Activated CD4-positive, alpha-beta memory T cell treated with anti-CD3 and anti-CD28 coated beads, Interleukin-2, amount 10 ng/mL, durations not matched to agents 7 days and 5 days (primary cell): ENCODE measurements at regions of chr19 and their contacts with region 1.

Region 1: GRCh38 chr19:39970675-39971379 is at the start of gene PSMC4:
- DNase-seq: peak; percentile 99
- H3K4me3 Mint-ChIP-seq: peak within 1 kb of the TSS; percentile 89
- H3K27ac Mint-ChIP-seq: peak within 1 kb of the TSS; percentile 88
- H3K4me1 Mint-ChIP-seq: peaks cover 48% of the 10 kb centered on the region
- H3K27me3 Mint-ChIP-seq: no peaks in the 10 kb centered on the region
- total RNA-seq, gene PSMC4: 96.4 to 97.6 TPM

Region 2: GRCh38 chr19:39792999-39793546 is 177.8 kb before region 1 on chr19:
- CTCF ChIA-PET with region 1: interaction called, 22 read pairs
- POLR2A ChIA-PET with region 1: no interaction called
- DNase-seq: peak; percentile 78
- H3K4me3 Mint-ChIP-seq: peak overlapping the region; percentile 73
- H3K27ac Mint-ChIP-seq: no peak overlapping the region
- H3K4me1 Mint-ChIP-seq: peaks cover 14% of the 10 kb centered on the region
- H3K27me3 Mint-ChIP-seq: peaks cover 24% of the 10 kb centered on the region

Region 3: DNA sequence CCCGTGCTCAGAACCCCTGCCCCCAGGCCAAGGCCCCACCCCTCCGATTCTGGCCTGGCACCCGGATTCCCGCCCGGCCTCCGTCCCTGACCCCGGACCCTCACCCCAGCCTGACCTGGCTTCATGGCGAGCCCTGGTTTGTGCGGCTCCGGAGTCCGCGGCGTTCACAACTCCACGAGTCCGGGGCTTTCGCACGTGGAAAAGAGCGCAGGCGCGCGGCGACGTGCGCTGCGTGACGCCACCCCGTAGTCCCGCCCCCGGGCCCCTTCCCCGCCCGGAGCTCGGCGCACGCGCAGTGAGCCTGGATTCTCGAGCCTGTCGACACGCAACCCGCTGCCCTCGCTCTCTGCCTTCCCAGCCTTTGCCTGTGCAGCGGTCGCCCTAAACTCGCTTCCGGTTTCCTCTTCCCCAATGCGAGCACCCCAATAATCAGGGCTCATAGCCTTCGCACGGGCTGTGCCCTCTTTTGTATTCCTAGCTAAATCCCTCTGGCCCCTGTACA is 124.6 kb before region 1 on chr19 and contains the start of gene FBL:
- CTCF ChIA-PET with region 1: interaction called, 25 read pairs
- POLR2A ChIA-PET with region 1: interaction called, 26 read pairs
- DNase-seq: peak; percentile 98
- H3K4me3 Mint-ChIP-seq: peak within 1 kb of the TSS; percentile 88
- H3K27ac Mint-ChIP-seq: peak within 1 kb of the TSS; percentile 87
- H3K4me1 Mint-ChIP-seq: peaks cover 48% of the 10 kb centered on the region
- H3K27me3 Mint-ChIP-seq: no peaks in the 10 kb centered on the region
- total RNA-seq, gene FBL: 294 to 302 TPM

Region 4: DNA sequence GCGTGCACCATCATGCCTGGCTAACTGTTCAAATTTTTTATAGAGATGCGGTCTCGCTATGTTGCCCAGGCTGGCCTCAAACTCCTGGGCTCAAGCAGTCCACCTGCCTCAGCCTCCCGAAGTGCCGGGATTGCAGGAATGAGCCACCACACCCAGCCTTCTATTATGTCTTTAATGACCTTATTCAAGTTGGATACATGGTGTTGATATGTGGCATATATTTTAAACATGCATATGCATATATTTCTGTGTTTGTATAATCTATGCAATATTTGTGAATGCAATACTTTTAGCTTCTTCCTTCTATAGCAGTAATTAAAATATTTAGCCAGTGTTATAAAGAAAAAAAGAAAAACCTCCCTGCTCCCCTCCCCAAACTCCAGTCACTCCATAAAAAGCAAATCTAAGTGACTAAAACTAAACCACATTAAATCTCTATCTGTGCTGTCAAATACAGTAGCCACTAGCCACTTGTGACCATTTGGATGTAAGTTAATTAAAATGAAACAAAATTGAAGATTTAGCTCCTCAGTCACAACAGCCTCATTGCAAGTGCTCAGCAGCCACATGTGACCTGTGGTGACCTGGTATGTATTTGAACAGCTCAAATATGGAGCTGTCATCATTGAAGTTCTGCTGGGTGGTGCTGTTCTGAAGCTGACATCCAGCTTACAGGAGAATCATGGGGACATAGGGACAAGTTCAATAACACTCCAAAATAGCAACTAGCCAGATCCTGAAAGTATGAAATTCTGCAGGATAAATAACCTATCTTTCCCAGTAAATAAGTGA is 63.8 kb before region 1 on chr19:
- CTCF ChIA-PET with region 1: interaction called, 18 read pairs
- POLR2A ChIA-PET with region 1: interaction called, 3 read pairs
- DNase-seq: no peak
- H3K4me3 Mint-ChIP-seq: no peak overlapping the region
- H3K27ac Mint-ChIP-seq: no peak overlapping the region
- H3K4me1 Mint-ChIP-seq: no peaks in the 10 kb centered on the region
- H3K27me3 Mint-ChIP-seq: no peaks in the 10 kb centered on the region

Region 5: GRCh38 chr19:39953915-39954314 is 16.9 kb before region 1 on chr19:
- CTCF ChIA-PET with region 1: interaction called, 19 read pairs
- POLR2A ChIA-PET with region 1: interaction called, 23 read pairs
- DNase-seq: no peak
- H3K4me3 Mint-ChIP-seq: no peak overlapping the region
- H3K27ac Mint-ChIP-seq: peak overlapping the region; percentile 52
- H3K4me1 Mint-ChIP-seq: peaks cover 39% of the 10 kb centered on the region
- H3K27me3 Mint-ChIP-seq: no peaks in the 10 kb centered on the region

Region 6: DNA sequence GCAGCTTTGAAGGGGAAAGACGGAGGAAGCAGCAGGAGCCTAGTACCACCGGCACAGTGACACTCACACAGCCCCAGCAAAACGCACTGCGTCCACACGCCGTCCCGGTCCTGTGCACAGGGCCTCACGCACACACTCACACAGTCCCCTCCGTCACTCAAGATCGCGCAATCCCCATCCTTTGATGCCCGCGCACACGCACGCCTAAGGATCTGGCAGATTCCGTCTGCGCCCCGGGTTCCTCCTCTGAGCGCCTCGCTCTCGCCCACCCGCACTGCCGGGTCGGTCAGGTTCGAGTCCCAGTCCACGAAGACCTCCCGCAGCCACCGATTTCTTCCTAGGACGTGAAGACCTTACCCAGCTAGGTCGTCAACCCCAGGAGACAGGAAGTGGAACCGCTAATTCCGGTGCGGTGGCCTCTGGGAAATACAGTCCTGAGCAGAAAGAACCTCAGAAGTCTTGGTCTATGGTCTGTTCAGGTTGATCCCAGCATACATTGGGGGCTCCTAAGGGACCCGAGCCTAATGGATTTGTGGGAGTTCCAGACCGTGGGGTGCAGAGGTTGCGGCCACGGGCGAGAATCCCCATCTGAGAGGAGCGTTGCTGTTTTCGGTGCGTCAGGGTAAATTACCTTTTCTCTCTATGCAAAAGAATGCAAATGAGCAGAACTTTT is 85.1 kb after region 1 on chr19 and contains the start of gene ZNF780B:
- CTCF ChIA-PET with region 1: interaction called, 10 read pairs
- POLR2A ChIA-PET with region 1: interaction called, 8 read pairs
- DNase-seq: peak; percentile 82
- H3K4me3 Mint-ChIP-seq: peak within 1 kb of the TSS; percentile 99
- H3K27ac Mint-ChIP-seq: peak within 1 kb of the TSS; percentile 91
- H3K4me1 Mint-ChIP-seq: peaks cover 43% of the 10 kb centered on the region
- H3K27me3 Mint-ChIP-seq: peaks cover 17% of the 10 kb centered on the region
- total RNA-seq, gene ZNF780B: 19.9 to 20.1 TPM